HCT116 (cell line): ENCODE measurements at regions of chr20 and their contacts with region 1.

Region 1: DNA sequence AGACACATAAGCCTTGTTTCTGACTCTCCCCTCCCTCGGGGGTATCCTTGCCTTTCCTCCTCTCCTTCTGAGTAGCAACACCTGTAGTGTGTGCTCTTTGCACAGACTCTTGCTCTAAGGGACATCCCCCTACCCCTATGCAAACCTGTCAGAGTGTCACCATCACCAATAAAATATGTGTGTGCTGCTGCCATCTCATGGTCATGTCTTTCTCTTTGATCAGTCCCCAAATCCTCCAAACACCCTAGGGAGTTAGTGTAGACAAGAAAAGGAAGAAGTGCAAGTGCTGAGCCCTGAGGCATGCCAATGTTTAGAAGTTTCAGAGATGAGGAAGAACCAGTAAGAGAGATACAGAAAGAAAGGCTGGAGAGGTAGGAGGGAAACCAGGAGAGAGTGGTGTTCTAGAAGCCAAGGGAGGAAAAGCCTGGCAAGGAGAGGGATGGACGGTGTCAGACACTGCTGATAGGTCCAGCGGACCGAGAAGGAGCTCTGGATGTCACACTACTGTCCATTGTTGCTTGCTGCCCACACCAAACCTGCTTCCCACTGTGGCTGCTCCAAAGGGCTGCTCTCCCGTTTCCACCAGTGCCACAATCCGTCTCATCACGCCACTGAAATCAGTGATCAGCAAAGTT is 16.4 kb downstream of the TRMT6 start:
- DNase-seq: no peak
- ATAC-seq: peak; percentile 81
- H3K4me3 ChIP-seq: no peak overlapping the region
- H3K27ac ChIP-seq: no peak overlapping the region
- H3K4me1 ChIP-seq: no peaks in the 10 kb centered on the region
- H3K27me3 ChIP-seq: peaks cover 11% of the 10 kb centered on the region; the same call in 1 of the 2 replicates
- CTCF ChIP-seq: peak; percentile 17 to 50 (median 47); a peak in 4 of 6 replicates
- POLR2A ChIP-seq: no peak
- RAD21 ChIP-seq: peak; percentile 62

Region 2: DNA sequence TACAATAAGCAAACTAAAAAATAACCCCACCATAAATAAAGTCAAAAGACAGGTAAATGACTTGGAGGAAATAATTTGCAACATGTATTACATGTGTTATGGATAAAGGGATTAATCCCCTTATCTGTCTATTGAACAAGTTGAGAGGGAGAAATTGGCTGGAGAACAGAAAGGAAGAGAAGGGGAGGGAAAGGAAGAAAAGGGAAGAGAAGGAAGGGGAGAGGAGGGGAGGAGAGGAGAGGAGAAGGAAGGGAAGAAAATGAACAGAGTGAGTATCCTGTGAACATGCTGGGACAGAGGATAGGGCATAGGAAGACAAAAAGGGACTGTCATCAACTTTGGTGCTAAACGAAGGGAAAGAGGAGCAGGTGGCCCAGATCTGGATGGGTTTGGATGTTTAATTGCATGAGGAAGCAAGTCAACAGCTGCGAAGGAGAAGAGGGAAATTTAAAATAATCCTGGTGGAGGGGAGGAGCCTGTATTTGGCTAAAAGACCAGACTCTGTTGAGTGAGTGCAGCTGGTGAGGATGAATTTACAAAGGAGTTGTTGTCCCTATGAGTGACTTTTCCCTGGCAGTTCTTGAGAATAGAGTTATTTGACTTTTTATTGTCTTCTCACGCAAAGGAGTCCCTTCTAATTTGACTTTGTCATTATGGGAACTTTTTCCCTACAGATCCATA is 197.9 kb before region 1 on chr20:
- CTCF ChIA-PET with region 1: no interaction called
- POLR2A ChIA-PET with region 1: no interaction called
- RAD21 ChIA-PET with region 1: no interaction called
- intact Hi-C with region 1: no loop called
- DNase-seq: no peak
- ATAC-seq: no peak
- H3K4me3 ChIP-seq: no peak overlapping the region
- H3K27ac ChIP-seq: no peak overlapping the region
- H3K4me1 ChIP-seq: peaks cover 7 to 20% of the 10 kb centered on the region in 2 experiments; a peak in 3 of 4 replicates
- H3K27me3 ChIP-seq: no peaks in the 10 kb centered on the region
- CTCF ChIP-seq: no peak
- POLR2A ChIP-seq: no peak
- RAD21 ChIP-seq: no peak

Region 3: DNA sequence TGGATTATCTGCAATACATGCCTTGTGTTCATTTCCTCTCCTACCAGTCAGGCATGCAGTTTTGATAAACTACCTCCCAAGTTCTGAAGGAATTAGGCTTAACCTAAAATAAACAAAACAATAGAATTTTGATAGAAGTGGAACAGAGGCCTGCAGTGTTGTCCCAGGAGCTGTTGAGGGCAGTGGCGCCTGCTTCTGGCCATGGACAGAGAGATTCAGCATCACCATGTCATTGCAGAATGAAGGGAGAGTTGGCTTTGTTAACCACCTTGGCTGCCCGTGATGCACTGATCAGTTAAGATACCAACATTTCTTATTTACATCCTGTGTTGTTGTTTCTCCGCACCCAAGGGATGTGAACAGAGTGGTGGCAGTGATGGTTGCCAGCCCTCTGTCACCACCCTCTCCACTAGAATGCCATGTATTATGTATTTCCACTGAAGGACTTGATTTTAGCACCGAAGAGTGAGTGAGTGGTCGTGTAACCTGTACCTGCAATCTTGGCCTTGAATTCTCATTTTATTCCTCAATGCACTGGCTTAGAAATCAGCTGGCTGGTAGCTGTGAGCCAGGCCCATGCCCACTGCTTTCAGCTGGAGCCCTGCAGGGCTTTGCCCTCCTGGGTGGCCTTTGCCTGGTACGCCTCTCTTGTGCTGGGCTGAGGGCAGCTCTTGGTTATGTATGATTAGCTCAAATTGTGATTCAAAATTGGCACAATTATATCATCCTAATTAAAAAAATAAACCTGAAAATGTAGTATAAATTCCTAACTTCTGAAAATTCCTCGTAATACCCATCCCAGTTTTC is 127.3 kb before region 1 on chr20:
- CTCF ChIA-PET with region 1: interaction called, 4 read pairs
- POLR2A ChIA-PET with region 1: no interaction called
- RAD21 ChIA-PET with region 1: no interaction called
- intact Hi-C with region 1: loop called (anchors 10 kb)
- DNase-seq: no peak
- ATAC-seq: no peak
- H3K4me3 ChIP-seq: no peak overlapping the region
- H3K27ac ChIP-seq: no peak overlapping the region
- H3K4me1 ChIP-seq: peaks cover 6 to 11% of the 10 kb centered on the region in 2 experiments; a peak in 2 of 4 replicates
- H3K27me3 ChIP-seq: no peaks in the 10 kb centered on the region
- CTCF ChIP-seq: peak in 2 of 3 experiments; percentile 9 to 21; a peak in 1 of 6 replicates
- POLR2A ChIP-seq: no peak
- RAD21 ChIP-seq: peak; percentile 42